ENCODE measurements at regions of chr6 and their contacts with region 1.

Region 1: DNA sequence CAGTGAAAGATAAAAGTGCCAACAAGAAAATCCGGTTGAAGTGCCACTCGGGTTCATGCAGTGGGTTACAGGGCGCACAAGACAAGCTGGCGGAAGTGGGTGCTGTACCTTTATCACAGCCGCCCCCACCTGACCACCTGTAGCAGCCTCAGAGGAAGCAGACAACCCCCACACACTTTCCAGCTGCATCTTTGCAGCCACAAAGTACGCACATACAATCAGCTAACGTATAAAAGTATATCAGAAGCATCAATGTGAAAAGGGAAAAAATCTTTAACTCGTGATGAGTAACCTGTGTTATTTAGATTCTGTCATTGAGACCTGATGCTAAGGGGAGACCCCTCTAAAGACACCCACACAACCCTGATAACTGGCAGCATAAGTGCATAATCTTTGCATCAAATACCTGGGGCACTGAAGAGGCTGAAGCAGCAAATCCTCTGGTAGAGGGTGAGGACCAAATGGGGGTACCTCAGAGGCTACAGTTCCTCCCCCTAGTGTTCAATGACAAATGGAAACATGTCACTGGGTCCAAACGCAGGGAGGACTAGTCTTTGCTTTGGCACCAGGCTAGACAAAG is 22.1 kb downstream of the BACH2 start:
- DNase-seq: peak; percentile 99
- ATAC-seq: peak; percentile 84
- H3K4me3 Mint-ChIP-seq: peak overlapping the region; percentile 47
- H3K27ac Mint-ChIP-seq: peak overlapping the region; percentile 96
- H3K4me1 Mint-ChIP-seq: peaks cover 87% of the 10 kb centered on the region
- H3K27me3 Mint-ChIP-seq: no peaks in the 10 kb centered on the region
- CTCF ChIP-seq: no peak

Region 2: DNA sequence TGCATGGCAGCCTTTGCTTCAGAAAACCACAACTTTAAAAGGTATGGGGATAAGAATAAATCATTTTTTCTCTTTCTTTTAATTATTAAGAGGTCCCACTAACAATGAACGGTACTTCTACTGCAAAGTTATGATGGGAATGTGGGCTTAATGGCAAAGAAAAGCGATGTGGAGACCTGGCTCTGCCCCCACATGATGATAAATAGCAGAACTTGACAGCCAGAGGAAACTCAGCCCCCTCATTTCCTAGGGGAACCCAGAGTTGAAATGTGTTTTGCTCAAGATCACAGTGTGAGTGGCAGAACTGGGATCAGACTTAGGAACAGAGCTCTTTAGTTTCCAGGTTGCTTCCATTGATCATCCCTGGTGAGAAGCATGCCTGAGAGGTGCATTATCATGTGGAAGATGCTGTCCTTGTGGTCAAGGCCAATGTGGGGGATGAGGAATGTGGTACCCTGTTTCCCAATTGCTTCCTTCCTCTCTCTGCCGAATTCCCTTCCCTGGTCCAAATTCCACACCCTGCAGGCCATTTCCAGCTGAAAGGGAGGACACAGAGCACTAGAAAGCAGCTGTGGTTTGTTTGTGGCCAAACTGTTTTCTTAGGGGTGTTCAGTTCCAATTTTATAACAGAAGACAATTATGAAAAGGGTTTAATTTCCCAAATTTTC is 43.9 kb before region 1 on chr6:
- CTCF ChIA-PET with region 1: interaction called, 5 read pairs
- POLR2A ChIA-PET with region 1: interaction called, 12 read pairs
- intact Hi-C with region 1: loop called (anchors 5 kb)
- DNase-seq: peak; percentile 34
- ATAC-seq: no peak
- H3K4me3 Mint-ChIP-seq: peak overlapping the region; percentile 52
- H3K27ac Mint-ChIP-seq: peak overlapping the region; percentile 96
- H3K4me1 Mint-ChIP-seq: peaks cover 92% of the 10 kb centered on the region
- H3K27me3 Mint-ChIP-seq: no peaks in the 10 kb centered on the region
- CTCF ChIP-seq: no peak

Region 3: DNA sequence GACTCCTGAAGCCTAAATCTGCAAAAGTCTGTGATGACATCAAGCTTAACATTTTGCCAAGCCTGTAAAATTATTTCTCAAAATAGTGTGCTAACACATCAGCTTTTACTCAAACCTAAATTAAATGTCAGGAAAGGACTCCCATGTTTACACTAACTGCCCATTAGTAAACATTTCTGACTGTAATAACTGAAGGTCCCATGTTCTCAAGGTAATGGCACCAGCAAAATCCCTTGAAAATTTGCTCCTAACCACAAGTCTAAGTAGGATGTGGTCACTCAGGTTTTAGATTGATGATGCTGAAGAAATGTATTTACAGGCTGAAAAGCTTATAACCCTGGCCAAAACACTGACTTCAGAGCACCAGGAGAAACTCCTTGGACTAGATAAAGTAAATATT is 10.9 kb before region 1 on chr6:
- CTCF ChIA-PET with region 1: interaction called, 7 read pairs
- POLR2A ChIA-PET with region 1: interaction called, 12 read pairs
- intact Hi-C with region 1: no loop called
- DNase-seq: no peak
- ATAC-seq: no peak
- H3K4me3 Mint-ChIP-seq: no peak overlapping the region
- H3K27ac Mint-ChIP-seq: peak overlapping the region; percentile 96
- H3K4me1 Mint-ChIP-seq: peaks cover 96% of the 10 kb centered on the region
- H3K27me3 Mint-ChIP-seq: no peaks in the 10 kb centered on the region
- CTCF ChIP-seq: no peak

Region 4: DNA sequence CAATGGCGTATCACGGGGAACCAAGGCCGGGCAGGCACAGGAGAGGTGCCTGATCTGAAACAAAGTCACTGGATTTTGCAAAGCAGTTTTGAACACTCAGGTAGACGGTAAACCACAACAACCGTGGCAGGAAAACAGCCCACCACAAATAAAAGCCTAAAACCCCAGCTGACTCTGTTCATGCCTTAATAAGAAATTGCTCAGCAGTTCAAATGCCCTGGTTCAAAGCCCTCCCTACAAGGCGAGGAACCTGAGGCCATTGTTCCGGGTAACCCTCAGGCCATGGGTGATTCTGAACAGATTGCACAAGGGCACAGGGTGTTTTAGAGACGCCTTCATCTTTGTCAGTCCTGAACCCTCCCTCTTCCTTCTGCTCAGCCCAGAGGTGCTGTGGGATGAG is 198.2 kb after region 1 on chr6:
- CTCF ChIA-PET with region 1: interaction called, 13 read pairs
- POLR2A ChIA-PET with region 1: interaction called, 4 read pairs
- intact Hi-C with region 1: no loop called
- DNase-seq: peak; percentile 64
- ATAC-seq: peak; percentile 18
- H3K4me3 Mint-ChIP-seq: peak overlapping the region; percentile 7
- H3K27ac Mint-ChIP-seq: peak overlapping the region; percentile 88
- H3K4me1 Mint-ChIP-seq: peaks cover 78% of the 10 kb centered on the region
- H3K27me3 Mint-ChIP-seq: no peaks in the 10 kb centered on the region
- CTCF ChIP-seq: no peak